Activated CD4-positive, alpha-beta T cell treated with anti-CD3 and anti-CD28 coated beads, Interleukin-2, amount 10 ng/mL, durations not matched to agents 24 days and 14 days (primary cell): ENCODE measurements at regions of chrX and their contacts with region 1.

Region 1: DNA sequence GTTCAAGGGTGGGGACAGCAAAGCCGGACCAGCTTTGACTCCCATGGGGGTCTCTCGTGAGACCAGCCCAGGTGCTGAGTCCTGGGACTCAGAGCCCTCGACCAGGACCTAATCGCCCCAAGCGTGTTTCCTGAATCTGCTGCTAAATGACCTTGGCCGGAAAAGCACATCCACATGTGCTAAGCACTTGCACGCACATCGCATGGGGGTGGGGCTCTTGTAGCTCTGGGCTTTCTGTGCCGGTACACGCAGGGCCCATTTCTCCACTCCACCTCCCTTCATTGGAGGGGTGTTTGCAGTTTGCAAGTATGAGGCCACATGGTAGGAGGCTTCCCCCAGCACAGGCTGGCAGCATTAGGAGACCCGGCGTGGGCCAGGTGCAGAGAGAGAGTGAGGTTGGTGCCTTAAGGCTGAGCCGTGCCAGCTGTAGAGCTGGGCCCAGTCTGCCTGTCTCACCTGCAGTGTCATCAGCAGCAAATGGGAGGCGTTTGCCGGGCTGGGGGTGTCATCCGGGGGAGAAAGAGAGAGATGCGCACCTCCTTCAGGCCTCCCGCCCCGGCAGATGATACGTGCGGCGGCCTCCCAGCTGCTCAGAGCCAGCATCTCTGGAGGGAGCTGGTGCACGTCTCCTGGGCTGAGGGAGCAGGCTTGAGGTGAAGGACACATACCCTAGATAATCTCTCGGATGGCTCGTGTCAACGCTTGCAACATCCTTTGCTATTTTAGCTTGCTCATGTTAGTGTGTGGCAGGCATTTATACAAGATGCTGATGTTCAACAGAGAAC is 45.2 kb upstream of the CLCN4 start:
- DNase-seq: peak; percentile 78
- H3K4me3 Mint-ChIP-seq: peak overlapping the region; percentile 87
- H3K27ac Mint-ChIP-seq: peak overlapping the region; percentile 99
- H3K4me1 Mint-ChIP-seq: peaks cover 41% of the 10 kb centered on the region
- H3K27me3 Mint-ChIP-seq: no peaks in the 10 kb centered on the region

Region 2: GRCh38 chrX:9885150-9885549 is 226.4 kb before region 1 on chrX:
- intact Hi-C with region 1: no loop called
- DNase-seq: peak; percentile 79
- H3K4me3 Mint-ChIP-seq: no peak overlapping the region
- H3K27ac Mint-ChIP-seq: no peak overlapping the region
- H3K4me1 Mint-ChIP-seq: no peaks in the 10 kb centered on the region
- H3K27me3 Mint-ChIP-seq: peaks cover 12% of the 10 kb centered on the region

Region 3: GRCh38 chrX:10007621-10008020 is 103.9 kb before region 1 on chrX:
- intact Hi-C with region 1: loop called (anchors 1 kb)
- DNase-seq: no peak
- H3K4me3 Mint-ChIP-seq: no peak overlapping the region
- H3K27ac Mint-ChIP-seq: no peak overlapping the region
- H3K4me1 Mint-ChIP-seq: peaks cover 44% of the 10 kb centered on the region
- H3K27me3 Mint-ChIP-seq: no peaks in the 10 kb centered on the region

Region 4: GRCh38 chrX:11016728-11017127 is 905.2 kb after region 1 on chrX:
- intact Hi-C with region 1: no loop called
- DNase-seq: no peak
- H3K4me3 Mint-ChIP-seq: no peak overlapping the region
- H3K27ac Mint-ChIP-seq: no peak overlapping the region
- H3K4me1 Mint-ChIP-seq: no peaks in the 10 kb centered on the region
- H3K27me3 Mint-ChIP-seq: no peaks in the 10 kb centered on the region